Astrocyte of the cerebellum (primary cell): ENCODE measurements at regions of chr16 and their contacts with region 1.

Region 1: GRCh38 chr16:67608364-67608763 is 36.6 kb upstream of the CARMIL2 start:
- DNase-seq: no peak
- H3K4me3 ChIP-seq: no peak overlapping the region
- CTCF ChIP-seq: no peak

Region 2: GRCh38 chr16:67561824-67562525 is 46.4 kb before region 1 on chr16:
- in situ Hi-C with region 1: no loop called
- DNase-seq: peak; percentile 88
- H3K4me3 ChIP-seq: peak overlapping the region; percentile 87
- CTCF ChIP-seq: no peak

Region 3: GRCh38 chr16:67571981-67572431 is 36.4 kb before region 1 on chr16:
- in situ Hi-C with region 1: loop called (anchors 5 kb)
- DNase-seq: no peak
- H3K4me3 ChIP-seq: no peak overlapping the region
- CTCF ChIP-seq: no peak

Region 4: DNA sequence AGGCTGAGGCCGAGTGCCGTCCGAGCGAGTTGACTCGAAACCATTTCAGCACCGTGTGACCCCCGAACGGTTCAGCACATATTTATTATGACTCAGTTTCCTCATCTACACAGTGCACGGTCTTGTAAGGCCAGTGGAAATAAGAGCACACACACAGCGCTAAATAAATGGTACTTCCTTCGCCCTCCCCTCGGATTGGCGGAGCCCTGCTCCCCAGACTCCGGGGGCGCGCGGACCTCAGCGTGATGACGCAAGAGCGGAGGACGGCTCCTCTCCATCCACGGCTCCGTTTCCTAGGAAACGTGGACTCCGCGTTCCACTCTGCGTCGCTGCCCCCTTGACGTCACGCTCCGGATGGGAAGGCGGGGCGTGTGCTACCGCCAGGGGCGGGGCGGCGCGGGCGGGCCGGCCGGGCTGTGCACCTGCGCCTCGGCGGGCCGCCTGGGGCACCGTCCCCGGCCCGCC is 52.2 kb after region 1 on chr16 and contains the start of gene PARD6A:
- in situ Hi-C with region 1: no loop called
- DNase-seq: peak; percentile 91
- H3K4me3 ChIP-seq: peak within 1 kb of the TSS; percentile 90
- CTCF ChIP-seq: no peak

Region 5: GRCh38 chr16:67736858-67737257 is 128.5 kb after region 1 on chr16:
- in situ Hi-C with region 1: no loop called
- DNase-seq: no peak
- H3K4me3 ChIP-seq: no peak overlapping the region
- CTCF ChIP-seq: no peak